Head of caudate nucleus (tissue), 42 donors: ENCODE measurements at regions of chr15 and their contacts with region 1.

Region 1: DNA sequence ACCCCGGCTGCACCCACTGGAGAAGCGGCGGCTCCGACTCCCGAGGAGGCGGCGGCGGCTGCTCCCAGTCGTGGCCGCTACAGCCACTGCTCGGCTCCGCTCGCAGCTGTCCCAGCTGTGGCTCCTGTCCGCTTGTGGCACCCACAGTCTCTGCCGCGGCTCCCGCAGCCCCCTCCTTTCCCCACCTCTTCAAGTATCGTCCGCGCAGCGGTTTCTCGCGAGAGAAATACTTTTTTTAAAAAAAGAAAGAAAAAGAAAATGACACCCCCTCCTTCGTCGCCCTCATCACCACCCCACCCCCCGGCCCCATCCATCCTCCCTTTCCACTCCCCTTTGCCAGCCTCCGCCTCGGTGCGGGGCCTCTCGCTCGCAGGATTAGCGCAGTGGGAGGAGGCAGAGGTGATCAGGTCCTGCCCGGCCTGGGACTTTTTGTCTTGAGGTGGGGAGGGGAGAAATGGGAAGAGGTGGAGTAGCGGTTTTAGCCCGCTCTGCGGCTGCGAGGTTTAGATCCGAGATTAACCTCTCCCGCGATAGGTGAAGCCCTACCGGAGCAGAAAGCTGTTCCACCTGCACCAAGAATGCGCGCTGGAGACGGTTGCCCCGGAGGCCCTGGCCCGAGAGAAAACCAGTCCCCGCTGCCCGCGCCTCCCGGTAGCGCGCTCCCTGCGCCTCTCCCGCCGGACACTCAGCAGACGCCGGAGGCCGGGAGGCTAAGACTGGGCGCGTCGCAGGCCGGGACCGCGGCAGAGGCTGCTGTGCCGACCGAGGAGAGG is at the start of gene FBN1:
- DNase-seq: peak; percentile 60 to 92 (median 83)

Region 2: GRCh38 chr15:48507416-48508065 is 138.2 kb before region 1 on chr15:
- intact Hi-C with region 1: loop called (anchors 10 kb)
- DNase-seq: peak in 13 of 42 donors; percentile 10 to 73 (median 26)

Region 3: GRCh38 chr15:48800811-48801455 is 155.2 kb after region 1 on chr15:
- intact Hi-C with region 1: loop called (anchors 10 kb)
- DNase-seq: no peak